Activated T-helper 1 cell treated with anti-CD3 and anti-CD28 coated beads, Interleukin-12 subunit alpha, Interleukin-12 subunit beta, Interleukin-2, Interleukin-4 antibody, amounts not matched to agents 30 ng/mL and 10 ng/mL and 1 ng/mL, durations not matched to agents 14 hours and 24 hours and 36 hours (primary cell): ENCODE measurements at regions of chr12 and their contacts with region 1.

Region 1: DNA sequence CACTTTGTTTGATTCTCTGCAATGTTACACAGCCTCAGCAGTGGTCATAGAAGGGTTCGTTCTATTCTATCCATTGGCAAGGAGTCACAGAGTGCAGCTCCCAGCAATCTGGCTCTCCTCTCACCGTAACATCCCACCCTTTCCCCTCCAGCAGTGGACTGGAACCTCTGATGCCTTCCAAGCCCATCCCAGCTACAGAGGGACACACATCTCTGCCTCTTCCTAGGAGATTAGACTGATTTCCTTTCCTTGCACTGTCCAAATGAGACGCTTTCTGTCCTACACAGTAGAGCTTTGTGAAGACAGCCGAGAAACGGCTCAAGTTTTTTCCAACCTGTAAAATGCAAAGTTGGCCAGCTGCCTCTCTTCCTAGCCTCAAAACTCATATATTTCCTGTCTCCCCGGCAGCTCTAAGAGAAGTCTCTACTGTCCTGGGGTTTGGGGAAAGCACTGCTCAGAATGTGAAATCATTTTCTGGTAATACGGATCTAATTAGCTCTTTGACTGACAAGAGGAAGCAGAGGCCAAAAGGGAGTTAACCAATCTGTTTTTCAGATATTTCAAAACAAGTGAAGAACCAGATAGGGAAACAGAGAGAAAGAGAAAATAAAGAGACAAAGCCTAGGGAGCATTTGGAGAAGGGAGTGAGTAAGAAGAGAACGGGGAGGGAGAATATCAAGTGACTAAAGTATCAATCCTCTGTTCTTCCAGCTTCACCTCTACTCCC is 516 bp downstream of the NINJ2 start:
- DNase-seq: no peak
- H3K4me3 Mint-ChIP-seq: peak overlapping the region; percentile 69
- H3K27ac Mint-ChIP-seq: peak overlapping the region; percentile 78
- H3K4me1 Mint-ChIP-seq: peaks cover 56% of the 10 kb centered on the region
- H3K27me3 Mint-ChIP-seq: no peaks in the 10 kb centered on the region

Region 2: GRCh38 chr12:583234-583869 is 79.4 kb before region 1 on chr12:
- intact Hi-C with region 1: no loop called
- DNase-seq: no peak
- H3K4me3 Mint-ChIP-seq: no peak overlapping the region
- H3K27ac Mint-ChIP-seq: no peak overlapping the region
- H3K4me1 Mint-ChIP-seq: no peaks in the 10 kb centered on the region
- H3K27me3 Mint-ChIP-seq: peaks cover 4% of the 10 kb centered on the region

Region 3: DNA sequence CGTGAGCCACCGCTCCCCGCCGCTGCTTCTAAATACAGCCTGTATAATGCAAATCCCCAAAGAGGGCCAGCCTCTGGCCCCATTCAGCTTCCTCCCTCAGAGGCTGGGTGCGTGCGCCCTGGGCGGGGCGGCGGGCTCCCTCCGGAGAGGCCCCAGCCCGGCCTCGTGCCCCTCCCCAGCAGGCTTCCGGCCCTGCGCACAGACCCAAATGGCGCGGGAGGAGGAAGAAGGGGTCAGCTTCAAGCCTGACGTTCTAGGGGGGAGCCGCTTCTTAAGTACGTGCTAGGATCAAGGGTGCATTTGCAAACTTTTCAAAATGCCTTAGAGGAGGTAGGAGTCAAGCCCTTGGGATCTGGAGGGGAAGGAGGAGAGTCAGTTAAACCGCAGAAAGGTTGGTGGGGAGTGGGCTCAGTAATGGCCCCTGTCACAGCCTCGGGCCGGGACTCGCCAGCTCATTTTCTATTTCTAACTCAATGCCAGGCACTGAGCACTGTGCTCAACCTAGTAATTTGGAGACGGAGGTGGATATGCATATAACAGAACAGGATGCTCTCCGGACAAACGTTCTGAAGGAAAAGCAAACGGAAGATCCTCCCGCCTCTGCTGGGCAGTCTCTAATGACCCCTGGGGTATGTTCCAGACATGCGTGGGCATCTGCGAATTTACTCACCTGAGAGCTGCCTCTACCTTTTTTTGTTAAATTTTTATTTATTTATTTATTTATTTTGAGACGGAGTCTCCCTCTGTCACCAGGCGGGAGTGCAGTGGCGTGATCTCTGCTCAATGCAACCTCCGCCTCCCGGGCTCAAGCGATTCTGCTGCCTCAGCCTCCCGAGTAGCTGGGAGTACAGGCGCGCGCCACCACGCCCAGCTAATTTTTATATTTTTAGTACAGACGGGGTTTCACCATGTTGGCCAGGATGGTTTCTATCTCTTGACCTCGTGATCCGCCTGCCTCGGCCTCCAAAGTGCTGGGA is 31.8 kb before region 1 on chr12:
- intact Hi-C with region 1: loop called (anchors 1 kb)
- DNase-seq: peak; percentile 84
- H3K4me3 Mint-ChIP-seq: peak overlapping the region; percentile 96
- H3K27ac Mint-ChIP-seq: peak overlapping the region; percentile 98
- H3K4me1 Mint-ChIP-seq: peaks cover 45% of the 10 kb centered on the region
- H3K27me3 Mint-ChIP-seq: no peaks in the 10 kb centered on the region

Region 4: DNA sequence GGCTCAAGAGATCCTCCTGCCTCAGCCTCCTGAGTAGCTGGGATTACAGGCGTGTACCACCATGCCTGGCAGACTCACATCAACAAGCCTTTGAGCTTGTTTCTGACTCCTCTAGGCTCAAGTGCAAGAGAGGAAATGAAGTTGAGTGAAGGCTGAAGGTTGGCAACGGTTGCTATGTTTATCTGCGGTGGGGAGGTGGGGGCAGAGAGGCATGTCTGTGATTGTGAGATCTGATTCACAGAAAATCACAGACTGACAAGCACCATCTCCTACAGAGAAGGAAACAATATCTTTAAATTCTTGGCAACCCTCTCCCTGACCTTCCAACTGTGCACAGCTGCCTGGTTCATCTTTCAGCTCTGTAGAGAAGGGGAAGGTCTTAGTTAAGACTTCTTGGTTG is 22.7 kb after region 1 on chr12:
- intact Hi-C with region 1: loop called (anchors 1 kb)
- DNase-seq: peak; percentile 79
- H3K4me3 Mint-ChIP-seq: peak overlapping the region; percentile 15
- H3K27ac Mint-ChIP-seq: peak overlapping the region; percentile 90
- H3K4me1 Mint-ChIP-seq: peaks cover 37% of the 10 kb centered on the region
- H3K27me3 Mint-ChIP-seq: no peaks in the 10 kb centered on the region

Region 5: GRCh38 chr12:1619587-1619986 is 956.9 kb after region 1 on chr12:
- intact Hi-C with region 1: no loop called
- DNase-seq: no peak
- H3K4me3 Mint-ChIP-seq: no peak overlapping the region
- H3K27ac Mint-ChIP-seq: no peak overlapping the region
- H3K4me1 Mint-ChIP-seq: peaks cover 29% of the 10 kb centered on the region
- H3K27me3 Mint-ChIP-seq: peaks cover 13% of the 10 kb centered on the region